ENCODE measurements at regions of chr12 and their contacts with region 1.

Region 1: GRCh38 chr12:122054842-122055520 is 23.6 kb upstream of the MLXIP start:
- DNase-seq: no peak
- ATAC-seq: no peak
- H3K4me3 Mint-ChIP-seq: no peak overlapping the region
- H3K27ac Mint-ChIP-seq: no peak overlapping the region
- H3K4me1 Mint-ChIP-seq: peaks cover 6% of the 10 kb centered on the region
- H3K27me3 Mint-ChIP-seq: no peaks in the 10 kb centered on the region

Region 2: DNA sequence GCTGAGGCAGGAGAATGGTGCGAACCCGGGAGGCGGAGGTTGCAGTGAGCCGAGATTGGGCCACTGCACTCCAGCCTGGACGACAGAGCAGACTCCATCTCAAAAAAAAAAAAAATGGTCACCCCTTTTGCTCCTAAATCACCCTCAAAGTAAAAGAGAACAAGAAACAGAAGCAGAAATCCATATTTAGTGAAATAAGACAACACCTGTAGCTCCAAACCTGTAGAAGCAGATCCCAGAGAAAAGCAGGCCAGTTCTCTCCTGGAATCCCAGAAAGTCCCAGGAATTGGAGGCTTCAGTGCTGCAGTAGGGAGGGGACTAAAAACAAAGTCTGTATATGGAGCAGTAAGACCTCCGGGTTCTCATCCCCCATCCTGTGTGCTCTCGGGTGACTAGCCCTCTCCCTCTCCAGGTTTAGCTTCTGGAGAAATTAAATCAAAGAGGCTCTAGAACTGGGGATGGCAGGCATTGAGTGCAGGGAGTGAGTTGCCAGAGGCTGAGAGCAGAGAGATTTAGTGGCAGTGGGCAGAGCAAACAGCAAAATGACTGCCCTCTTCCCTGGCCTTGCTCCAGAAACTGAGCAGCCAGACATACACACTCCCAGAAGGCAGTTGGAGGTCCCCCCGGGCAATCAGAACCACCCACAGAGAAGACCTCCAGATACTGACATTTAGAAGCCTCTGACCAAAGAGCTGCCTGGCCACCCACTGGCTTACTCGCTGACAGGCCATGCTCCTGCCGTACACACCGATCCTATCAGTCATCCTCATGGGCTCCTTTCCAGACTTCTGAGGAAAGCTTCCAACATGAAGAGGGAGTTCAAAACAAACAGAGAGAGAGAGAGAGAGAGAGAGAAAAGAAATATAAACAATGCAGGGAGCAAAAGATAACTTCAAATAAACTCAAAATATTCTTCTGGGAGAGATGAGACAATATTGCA is 17.3 kb after region 1 on chr12:
- CTCF ChIA-PET with region 1: interaction called, 35 read pairs
- DNase-seq: no peak
- ATAC-seq: no peak
- H3K4me3 Mint-ChIP-seq: no peak overlapping the region
- H3K27ac Mint-ChIP-seq: no peak overlapping the region
- H3K4me1 Mint-ChIP-seq: peaks cover 17% of the 10 kb centered on the region
- H3K27me3 Mint-ChIP-seq: peaks cover 3% of the 10 kb centered on the region

Region 3: GRCh38 chr12:122097927-122098756 is 43.2 kb after region 1 on chr12:
- CTCF ChIA-PET with region 1: interaction called, 11 read pairs
- DNase-seq: no peak
- ATAC-seq: no peak
- H3K4me3 Mint-ChIP-seq: no peak overlapping the region
- H3K27ac Mint-ChIP-seq: no peak overlapping the region
- H3K4me1 Mint-ChIP-seq: peaks cover 41% of the 10 kb centered on the region
- H3K27me3 Mint-ChIP-seq: no peaks in the 10 kb centered on the region

Region 4: GRCh38 chr12:122123051-122123760 is 68.2 kb after region 1 on chr12:
- CTCF ChIA-PET with region 1: interaction called, 130 read pairs
- DNase-seq: peak; percentile 77
- ATAC-seq: peak; percentile 73
- H3K4me3 Mint-ChIP-seq: no peak overlapping the region
- H3K27ac Mint-ChIP-seq: peak overlapping the region; percentile 48
- H3K4me1 Mint-ChIP-seq: peaks cover 19% of the 10 kb centered on the region
- H3K27me3 Mint-ChIP-seq: no peaks in the 10 kb centered on the region

Region 5: DNA sequence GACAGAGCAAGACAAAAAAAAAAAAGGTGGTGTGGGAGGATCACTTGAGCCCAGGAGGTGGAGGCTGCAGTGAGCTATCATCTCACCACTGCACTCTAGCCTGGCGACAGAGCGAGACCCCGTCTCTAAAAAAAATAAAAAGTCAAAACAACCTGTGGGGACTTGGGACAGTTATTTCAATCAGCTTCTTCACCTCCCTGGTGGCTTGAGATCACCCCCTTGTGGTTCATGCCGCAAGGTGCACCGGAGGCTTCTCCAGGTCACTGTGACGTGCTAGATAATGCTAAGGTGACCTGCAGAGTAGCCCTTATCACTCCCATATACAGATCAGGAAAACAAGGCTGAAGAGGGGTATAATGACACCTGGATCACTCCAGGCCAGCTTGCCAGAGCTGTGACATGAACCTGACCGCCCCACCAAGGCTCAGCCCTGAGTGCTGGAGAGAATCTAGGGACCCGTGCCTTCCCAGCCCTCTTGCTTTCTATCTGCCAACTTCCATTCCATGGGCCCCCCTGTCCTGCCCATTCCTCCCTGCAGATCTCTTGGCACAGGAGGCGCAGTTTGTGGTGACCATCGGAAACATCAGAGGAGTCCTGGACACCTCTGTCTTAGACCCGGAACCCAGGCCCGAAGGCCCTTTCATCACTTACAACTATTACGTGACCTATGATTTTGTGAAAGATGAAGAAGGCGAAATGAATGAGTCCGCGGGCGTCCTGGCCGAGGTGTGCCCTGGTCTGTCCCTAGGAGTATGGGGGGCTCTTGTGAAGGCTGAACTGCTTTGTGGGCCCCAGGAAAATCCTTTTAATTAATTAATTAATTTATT is 136.1 kb after region 1 on chr12:
- CTCF ChIA-PET with region 1: interaction called, 17 read pairs
- DNase-seq: peak; percentile 87
- ATAC-seq: peak; percentile 90
- H3K4me3 Mint-ChIP-seq: no peak overlapping the region
- H3K27ac Mint-ChIP-seq: no peak overlapping the region
- H3K4me1 Mint-ChIP-seq: peaks cover 3% of the 10 kb centered on the region
- H3K27me3 Mint-ChIP-seq: peaks cover 16% of the 10 kb centered on the region

Region 6: DNA sequence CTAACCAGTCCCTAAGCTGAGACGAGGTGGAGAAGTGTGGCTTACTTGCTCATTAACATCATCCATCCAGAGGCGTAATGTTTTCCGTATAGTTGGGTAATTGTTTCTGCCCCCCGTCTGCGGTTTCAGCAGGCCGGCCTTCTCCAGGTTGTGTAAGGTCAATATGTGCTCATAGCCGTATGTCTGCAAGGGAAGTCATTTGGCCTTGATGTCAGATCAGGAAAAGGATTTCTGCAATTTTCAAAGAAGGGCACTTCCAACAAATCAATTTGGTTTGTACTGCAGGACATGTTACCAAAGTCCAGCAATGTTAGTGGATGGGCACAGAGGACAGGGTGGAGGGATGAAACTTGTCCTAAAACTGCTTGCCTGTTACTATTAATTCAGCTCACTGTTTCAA is 180.8 kb after region 1 on chr12:
- CTCF ChIA-PET with region 1: no interaction called
- DNase-seq: no peak
- ATAC-seq: no peak
- H3K4me3 Mint-ChIP-seq: no peak overlapping the region
- H3K27ac Mint-ChIP-seq: no peak overlapping the region
- H3K4me1 Mint-ChIP-seq: no peaks in the 10 kb centered on the region
- H3K27me3 Mint-ChIP-seq: no peaks in the 10 kb centered on the region